ENCODE measurements at regions of chr17 and their contacts with region 1.

Region 1: DNA sequence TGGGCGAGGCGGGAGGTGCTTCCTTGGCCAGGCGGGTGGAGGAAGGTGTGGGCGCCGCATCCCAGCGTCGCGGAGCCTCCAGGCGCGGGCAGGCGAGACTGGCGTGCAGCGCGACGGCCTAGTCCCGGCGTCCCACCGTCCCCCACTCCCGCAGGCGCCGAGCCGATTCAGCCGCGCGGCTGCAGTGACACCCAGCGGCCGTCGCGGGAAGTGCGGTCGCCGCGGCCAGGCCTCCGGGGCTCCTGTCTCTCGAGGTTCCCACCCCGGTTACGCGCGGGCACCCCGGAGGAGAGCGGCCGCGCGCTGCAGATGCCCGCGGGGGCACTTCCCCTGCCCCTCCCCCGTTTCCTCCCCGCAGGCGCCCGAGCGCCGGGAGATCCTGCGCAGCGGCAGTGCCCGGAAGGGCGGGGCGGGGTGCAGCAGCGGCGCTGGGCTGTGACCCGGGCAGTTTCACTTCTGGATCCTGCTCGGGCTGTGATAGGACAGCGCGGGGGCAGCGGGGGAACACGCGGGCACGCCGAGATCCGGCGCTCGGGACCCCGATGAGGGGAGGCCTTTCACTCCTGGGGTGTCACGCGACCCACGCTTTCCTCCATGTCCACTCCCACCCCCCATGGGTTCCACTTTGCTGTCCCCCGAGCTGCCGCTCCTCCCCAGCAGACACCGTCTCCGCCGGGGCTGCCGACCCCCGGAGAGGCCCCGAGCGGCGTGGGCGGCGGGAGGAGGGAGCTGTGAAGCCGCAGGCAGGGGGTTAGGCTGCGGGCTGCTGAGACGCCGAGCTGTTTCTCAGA is 16.6 kb downstream of the GRB7 start:
- DNase-seq: peak; percentile 82
- H3K4me3 ChIP-seq: peak overlapping the region; percentile 67 to 76 (median 73)
- H3K27ac ChIP-seq: peak overlapping the region; percentile 29
- H3K4me1 ChIP-seq: peaks cover 21% of the 10 kb centered on the region
- H3K27me3 ChIP-seq: peaks cover 2% of the 10 kb centered on the region
- CTCF ChIP-seq: peak; percentile 66 to 86

Region 2: GRCh38 chr17:39199820-39200069 is 554.6 kb before region 1 on chr17:
- CTCF ChIA-PET with region 1: no interaction called
- dilution Hi-C with region 1: no loop called
- in situ Hi-C with region 1: no loop called
- intact Hi-C with region 1: loop called (anchors 10 kb)
- DNase-seq: peak; percentile 85
- H3K4me3 ChIP-seq: peak overlapping the region; percentile 72 to 91 (median 84)
- H3K27ac ChIP-seq: peak overlapping the region; percentile 100
- H3K4me1 ChIP-seq: peaks cover 33% of the 10 kb centered on the region
- H3K27me3 ChIP-seq: no peaks in the 10 kb centered on the region
- CTCF ChIP-seq: no peak

Region 3: DNA sequence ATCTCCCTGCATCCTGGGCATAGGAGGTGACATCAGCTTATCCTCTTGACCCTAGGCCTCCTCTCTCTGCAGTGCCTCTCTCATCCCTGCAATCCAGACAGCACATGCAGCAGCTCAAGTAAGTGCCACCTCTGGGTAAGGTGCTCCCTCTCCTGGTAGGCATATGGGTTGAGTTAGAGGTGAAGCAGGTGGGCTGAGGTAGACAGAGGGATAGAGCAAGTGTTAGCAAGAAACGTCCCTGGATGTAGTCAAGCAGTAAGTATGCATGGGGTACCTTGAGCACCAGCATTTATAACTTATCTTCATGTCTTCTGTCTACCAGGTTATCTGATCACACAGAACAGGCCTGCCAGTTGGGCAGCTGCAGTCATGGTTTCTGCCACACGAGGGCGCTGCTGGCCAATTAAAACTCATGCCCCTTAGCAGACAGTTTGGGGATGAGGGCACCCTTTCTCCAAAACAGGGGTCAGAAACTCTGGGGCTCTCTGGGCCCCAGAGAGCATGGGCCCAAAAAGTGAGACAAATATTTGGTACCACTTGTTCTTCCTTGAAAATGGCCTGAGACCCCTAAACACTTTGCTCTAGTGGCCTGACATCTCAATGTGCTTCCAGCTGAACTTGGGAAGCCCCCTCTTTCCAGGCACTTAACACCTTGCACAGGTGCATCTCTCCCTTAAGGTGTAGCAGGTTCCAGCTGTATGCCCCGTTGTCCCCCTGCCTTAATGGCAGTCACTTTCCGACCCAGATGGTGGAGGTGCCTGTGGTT is 206.5 kb before region 1 on chr17:
- CTCF ChIA-PET with region 1: no interaction called
- dilution Hi-C with region 1: no loop called
- in situ Hi-C with region 1: no loop called
- intact Hi-C with region 1: loop called (anchors 1 kb)
- DNase-seq: peak; percentile 34
- H3K4me3 ChIP-seq: no peak overlapping the region
- H3K27ac ChIP-seq: no peak overlapping the region
- H3K4me1 ChIP-seq: no peaks in the 10 kb centered on the region
- H3K27me3 ChIP-seq: no peaks in the 10 kb centered on the region
- CTCF ChIP-seq: peak; percentile 89 to 96

Region 4: DNA sequence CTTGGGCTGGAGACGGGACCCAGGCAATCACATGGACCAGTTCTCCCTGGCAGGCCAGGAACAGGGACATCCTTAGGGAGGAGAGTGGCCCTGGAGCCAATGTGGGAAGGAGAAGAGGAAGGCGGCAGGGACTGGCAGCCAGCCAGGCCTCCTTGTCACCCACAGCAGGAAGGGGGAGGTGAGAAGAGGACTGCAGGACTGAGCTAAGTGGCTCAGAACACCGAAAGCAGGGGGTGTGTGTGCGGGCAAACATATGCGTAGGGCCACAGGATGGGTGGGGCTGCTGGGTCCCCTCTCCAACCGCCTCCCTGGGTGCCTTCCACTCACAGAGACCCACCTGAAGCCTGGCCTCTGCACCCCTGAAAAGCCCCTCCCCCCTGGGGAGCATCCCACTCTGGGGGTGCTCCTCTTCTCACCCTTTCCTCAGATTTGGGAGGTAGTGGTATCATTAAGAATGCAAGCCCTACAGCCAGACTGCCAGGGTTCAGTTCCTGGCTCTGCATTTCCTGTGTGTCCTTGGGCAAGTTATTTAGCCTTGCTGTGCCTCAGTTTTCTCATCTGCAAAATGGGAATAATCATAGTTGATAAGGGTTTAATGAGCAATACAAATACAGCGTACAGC is 78.0 kb before region 1 on chr17:
- CTCF ChIA-PET with region 1: no interaction called
- dilution Hi-C with region 1: no loop called
- in situ Hi-C with region 1: no loop called
- intact Hi-C with region 1: no loop called
- DNase-seq: no peak
- H3K4me3 ChIP-seq: no peak overlapping the region
- H3K27ac ChIP-seq: no peak overlapping the region
- H3K4me1 ChIP-seq: peaks cover 3% of the 10 kb centered on the region
- H3K27me3 ChIP-seq: no peaks in the 10 kb centered on the region
- CTCF ChIP-seq: no peak

Region 5: GRCh38 chr17:39730095-39730921 is 24.0 kb before region 1 on chr17 and contains the start of gene MIEN1:
- CTCF ChIA-PET with region 1: no interaction called
- dilution Hi-C with region 1: no loop called
- in situ Hi-C with region 1: no loop called
- intact Hi-C with region 1: loop called (anchors 1 kb)
- DNase-seq: peak; percentile 75
- H3K4me3 ChIP-seq: peak within 1 kb of the TSS; percentile 68 to 69 (median 68)
- H3K27ac ChIP-seq: peak within 1 kb of the TSS; percentile 61
- H3K4me1 ChIP-seq: peaks cover 7% of the 10 kb centered on the region
- H3K27me3 ChIP-seq: no peaks in the 10 kb centered on the region
- CTCF ChIP-seq: peak; percentile 36 to 87
- total RNA-seq, gene MIEN1: 10.2 to 36.8 TPM

Region 6: GRCh38 chr17:39863918-39864746 is 109.8 kb after region 1 on chr17 and contains the start of gene IKZF3:
- CTCF ChIA-PET with region 1: no interaction called
- dilution Hi-C with region 1: no loop called
- in situ Hi-C with region 1: no loop called
- intact Hi-C with region 1: loop called (anchors 2 kb)
- DNase-seq: peak; percentile 68
- H3K4me3 ChIP-seq: no peak within 1 kb of the TSS
- H3K27ac ChIP-seq: no peak within 1 kb of the TSS
- H3K4me1 ChIP-seq: peaks cover 6% of the 10 kb centered on the region
- H3K27me3 ChIP-seq: peaks cover 47% of the 10 kb centered on the region
- CTCF ChIP-seq: peak in 1 of 2 donors; percentile 43
- total RNA-seq, gene IKZF3: 0.02 TPM in 1 of 2 donors, not detected in the other

Region 7: DNA sequence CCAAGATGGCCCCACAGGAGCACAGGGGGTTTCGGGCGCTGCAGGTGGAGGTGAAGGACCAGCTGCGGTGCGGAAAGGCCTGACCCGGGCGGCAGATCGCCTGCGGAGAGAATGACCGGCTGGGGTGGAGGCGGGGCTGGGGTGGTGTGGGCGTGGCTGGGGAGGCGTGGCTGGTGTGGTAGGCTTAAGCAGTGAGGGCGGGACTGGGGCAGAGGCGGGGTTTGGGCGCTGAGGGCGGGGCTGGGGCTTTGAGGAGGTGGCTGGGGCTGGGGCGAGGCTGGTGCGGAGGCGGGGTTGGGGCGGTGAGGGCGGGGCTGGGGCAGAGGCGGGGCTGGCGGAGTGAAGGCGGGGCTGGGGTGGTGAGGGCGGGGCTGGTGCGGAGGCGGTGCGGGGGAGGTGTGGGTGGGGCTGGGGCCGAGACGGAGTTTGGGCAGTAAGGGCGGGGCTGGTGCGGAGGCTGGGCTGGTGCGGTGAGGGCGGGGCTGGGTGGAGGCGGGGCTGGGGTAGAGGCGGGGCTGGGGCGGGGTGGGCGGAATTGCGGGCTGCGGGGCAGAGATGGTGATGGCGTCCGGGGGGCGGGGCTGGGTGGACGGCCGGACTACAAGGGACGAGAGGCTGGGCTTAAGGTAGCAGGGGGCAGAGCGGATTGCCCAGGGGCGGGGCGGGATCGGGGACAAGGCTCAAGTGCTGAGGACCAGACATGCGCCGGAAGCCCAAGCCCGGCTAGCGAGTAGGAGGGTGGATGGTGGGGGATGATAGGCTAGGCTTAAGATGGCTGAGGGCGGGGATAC is 198.5 kb after region 1 on chr17:
- CTCF ChIA-PET with region 1: no interaction called
- dilution Hi-C with region 1: no loop called
- in situ Hi-C with region 1: no loop called
- intact Hi-C with region 1: loop called (anchors 10 kb)
- DNase-seq: peak; percentile 85
- H3K4me3 ChIP-seq: peak overlapping the region; percentile 8 to 55 (median 21)
- H3K27ac ChIP-seq: no peak overlapping the region
- H3K4me1 ChIP-seq: peaks cover 8% of the 10 kb centered on the region
- H3K27me3 ChIP-seq: no peaks in the 10 kb centered on the region
- CTCF ChIP-seq: no peak

Region 8: GRCh38 chr17:40038882-40039513 is 284.6 kb after region 1 on chr17:
- CTCF ChIA-PET with region 1: no interaction called
- dilution Hi-C with region 1: no loop called
- in situ Hi-C with region 1: no loop called
- intact Hi-C with region 1: no loop called
- DNase-seq: peak; percentile 38
- H3K4me3 ChIP-seq: no peak overlapping the region
- H3K27ac ChIP-seq: no peak overlapping the region
- H3K4me1 ChIP-seq: peaks cover 3% of the 10 kb centered on the region
- H3K27me3 ChIP-seq: no peaks in the 10 kb centered on the region
- CTCF ChIP-seq: peak; percentile 56 to 68

Region 9: GRCh38 chr17:40268141-40268712 is 513.9 kb after region 1 on chr17:
- CTCF ChIA-PET with region 1: no interaction called
- dilution Hi-C with region 1: no loop called
- in situ Hi-C with region 1: no loop called
- intact Hi-C with region 1: no loop called
- DNase-seq: peak; percentile 15
- H3K4me3 ChIP-seq: no peak overlapping the region
- H3K27ac ChIP-seq: no peak overlapping the region
- H3K4me1 ChIP-seq: peaks cover 5% of the 10 kb centered on the region
- H3K27me3 ChIP-seq: no peaks in the 10 kb centered on the region
- CTCF ChIP-seq: no peak